CD4-positive, alpha-beta memory T cell (primary cell): ENCODE measurements at regions of chr16 and their contacts with region 1.

Region 1: GRCh38 chr16:30557957-30558788 is at the start of gene ZNF764:
- DNase-seq: peak; percentile 94 to 98 (median 96)
- H3K4me3 ChIP-seq: peak within 1 kb of the TSS; percentile 58 to 75
- H3K4me3 Mint-ChIP-seq: peak within 1 kb of the TSS; percentile 88 to 94 (median 92)
- H3K27ac ChIP-seq: peak within 1 kb of the TSS; percentile 95
- H3K27ac Mint-ChIP-seq: peak within 1 kb of the TSS; percentile 93 to 97 (median 95)
- H3K4me1 ChIP-seq: peaks cover 54% of the 10 kb centered on the region
- H3K4me1 Mint-ChIP-seq: peaks cover 19 to 55% (median 37%) of the 10 kb centered on the region in 4 donors
- H3K27me3 ChIP-seq: no peaks in the 10 kb centered on the region
- H3K27me3 Mint-ChIP-seq: no peaks in the 10 kb centered on the region
- total RNA-seq, gene ZNF764: 28.9 to 29.3 TPM

Region 2: DNA sequence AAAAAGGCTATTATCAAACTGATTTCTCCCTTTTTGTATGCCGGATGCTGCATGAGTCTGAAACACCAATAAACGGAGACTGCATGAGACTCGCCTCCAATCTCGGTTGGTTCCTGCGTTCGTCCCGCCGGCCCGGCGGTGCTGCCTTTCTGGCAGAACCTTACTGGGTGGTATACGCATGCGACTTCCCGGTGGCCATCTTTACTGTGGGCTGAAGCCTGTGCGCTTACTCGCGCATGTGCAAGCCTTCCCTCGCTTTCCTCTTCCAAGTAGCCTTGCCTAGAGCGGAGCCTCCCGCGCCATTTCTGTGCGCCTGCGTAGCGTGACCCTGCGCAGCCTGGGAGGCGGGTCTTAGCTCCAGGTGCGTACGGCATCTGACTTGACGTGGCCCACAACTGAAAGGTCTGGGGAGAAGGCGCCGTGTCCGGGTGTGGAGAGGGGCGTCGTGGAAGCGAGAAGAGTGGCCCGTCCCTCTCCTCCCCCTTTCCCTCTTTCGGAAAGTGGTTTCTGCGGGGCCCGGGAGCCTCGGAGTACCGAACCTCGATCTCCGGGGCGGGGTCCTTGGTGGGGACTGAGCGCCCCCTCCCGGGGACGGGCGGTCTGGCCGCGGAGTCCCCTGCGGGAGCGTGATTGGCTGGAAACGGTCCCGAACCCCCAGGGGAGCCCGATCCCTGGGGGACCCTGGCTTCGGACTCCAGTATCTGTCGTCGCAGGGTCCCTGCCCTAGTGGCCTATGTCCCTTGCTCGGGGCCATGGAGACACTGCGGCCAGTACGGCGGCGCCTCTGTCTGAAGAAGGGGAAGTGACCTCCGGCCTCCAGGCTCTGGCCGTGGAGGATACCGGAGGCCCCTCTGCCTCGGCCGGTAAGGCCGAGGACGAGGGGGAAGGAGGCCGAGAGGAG is 742.1 kb before region 1 on chr16 and contains the start of gene PAGR1:
- CTCF ChIA-PET with region 1: no interaction called
- POLR2A ChIA-PET with region 1: no interaction called
- intact Hi-C with region 1: no loop called
- DNase-seq: peak; percentile 99 to 100 (median 99)
- H3K4me3 ChIP-seq: peak within 1 kb of the TSS; percentile 91 to 95
- H3K4me3 Mint-ChIP-seq: peak within 1 kb of the TSS; percentile 95 to 99 (median 98)
- H3K27ac ChIP-seq: peak within 1 kb of the TSS; percentile 77
- H3K27ac Mint-ChIP-seq: peak within 1 kb of the TSS; percentile 94 to 100 (median 98)
- H3K4me1 ChIP-seq: peaks cover 66% of the 10 kb centered on the region
- H3K4me1 Mint-ChIP-seq: peaks cover 30 to 87% (median 56%) of the 10 kb centered on the region in 4 donors
- H3K27me3 ChIP-seq: no peaks in the 10 kb centered on the region
- H3K27me3 Mint-ChIP-seq: peaks cover 0 to 2% of the 10 kb centered on the region in 2 donors
- total RNA-seq, gene PAGR1: 43.7 to 44.9 TPM

Region 3: GRCh38 chr16:30472328-30472942 is 85.7 kb before region 1 on chr16 and contains the start of gene ITGAL:
- CTCF ChIA-PET with region 1: interaction called, 3 read pairs
- POLR2A ChIA-PET with region 1: interaction called, 14 read pairs
- intact Hi-C with region 1: no loop called
- DNase-seq: peak; percentile 87 to 97 (median 89)
- H3K4me3 ChIP-seq: peak within 1 kb of the TSS; percentile 77 to 96
- H3K4me3 Mint-ChIP-seq: peak within 1 kb of the TSS; percentile 98 to 99 (median 98)
- H3K27ac ChIP-seq: peak within 1 kb of the TSS; percentile 89
- H3K27ac Mint-ChIP-seq: peak within 1 kb of the TSS; percentile 93 to 97 (median 95)
- H3K4me1 ChIP-seq: peaks cover 67% of the 10 kb centered on the region
- H3K4me1 Mint-ChIP-seq: peaks cover 33 to 75% (median 45%) of the 10 kb centered on the region in 4 donors
- H3K27me3 ChIP-seq: no peaks in the 10 kb centered on the region
- H3K27me3 Mint-ChIP-seq: no peaks in the 10 kb centered on the region
- total RNA-seq, gene ITGAL: 648 to 657 TPM

Region 4: GRCh38 chr16:30546115-30546514 is 12.1 kb before region 1 on chr16:
- CTCF ChIA-PET with region 1: interaction called, 5 read pairs
- POLR2A ChIA-PET with region 1: interaction called, 12 read pairs
- intact Hi-C with region 1: no loop called
- DNase-seq: no peak
- H3K4me3 ChIP-seq: no peak overlapping the region
- H3K4me3 Mint-ChIP-seq: no peak overlapping the region
- H3K27ac ChIP-seq: no peak overlapping the region
- H3K27ac Mint-ChIP-seq: peak overlapping the region in 2 of 7 donors; percentile 5 to 31
- H3K4me1 ChIP-seq: peaks cover 16% of the 10 kb centered on the region
- H3K4me1 Mint-ChIP-seq: peaks cover 6 to 20% (median 12%) of the 10 kb centered on the region in 4 donors
- H3K27me3 ChIP-seq: no peaks in the 10 kb centered on the region
- H3K27me3 Mint-ChIP-seq: no peaks in the 10 kb centered on the region

Region 5: GRCh38 chr16:30585400-30586189 is 27.4 kb after region 1 on chr16 and contains the start of gene ZNF785:
- CTCF ChIA-PET with region 1: interaction called, 6 read pairs
- POLR2A ChIA-PET with region 1: interaction called, 35 read pairs
- intact Hi-C with region 1: loop called (anchors 1 kb)
- DNase-seq: peak; percentile 94 to 96 (median 95)
- H3K4me3 ChIP-seq: peak within 1 kb of the TSS; percentile 73 to 97
- H3K4me3 Mint-ChIP-seq: peak within 1 kb of the TSS; percentile 87 to 96 (median 91)
- H3K27ac ChIP-seq: peak within 1 kb of the TSS; percentile 79
- H3K27ac Mint-ChIP-seq: peak within 1 kb of the TSS; percentile 76 to 96 (median 93)
- H3K4me1 ChIP-seq: peaks cover 21% of the 10 kb centered on the region
- H3K4me1 Mint-ChIP-seq: peaks cover 9 to 38% (median 26%) of the 10 kb centered on the region in 4 donors
- H3K27me3 ChIP-seq: no peaks in the 10 kb centered on the region
- H3K27me3 Mint-ChIP-seq: no peaks in the 10 kb centered on the region
- total RNA-seq, gene ZNF785: 33.4 to 34.2 TPM

Region 6: GRCh38 chr16:30628627-30629540 is 70.7 kb after region 1 on chr16:
- CTCF ChIA-PET with region 1: interaction called, 3 read pairs
- POLR2A ChIA-PET with region 1: interaction called, 6 read pairs
- intact Hi-C with region 1: loop called (anchors 2 kb)
- DNase-seq: peak; percentile 72 to 83 (median 80)
- H3K4me3 ChIP-seq: peak overlapping the region in 1 of 2 donors; percentile 48
- H3K4me3 Mint-ChIP-seq: peak overlapping the region; percentile 67 to 86 (median 78)
- H3K27ac ChIP-seq: no peak overlapping the region
- H3K27ac Mint-ChIP-seq: peak overlapping the region; percentile 38 to 95 (median 87)
- H3K4me1 ChIP-seq: peaks cover 9% of the 10 kb centered on the region
- H3K4me1 Mint-ChIP-seq: peaks cover 4 to 9% (median 7%) of the 10 kb centered on the region in 4 donors
- H3K27me3 ChIP-seq: no peaks in the 10 kb centered on the region
- H3K27me3 Mint-ChIP-seq: peaks cover 0 to under 1% of the 10 kb centered on the region in 2 donors